Activated CD4-positive, alpha-beta T cell treated with anti-CD3 and anti-CD28 coated beads for 36 hours (primary cell): ENCODE measurements at regions of chr6 and their contacts with region 1.

Region 1: GRCh38 chr6:17599885-17600526 is at the start of gene FAM8A1:
- DNase-seq: peak; percentile 98
- ATAC-seq: peak; percentile 83
- H3K4me3 Mint-ChIP-seq: peak within 1 kb of the TSS; percentile 75
- H3K27ac Mint-ChIP-seq: peak within 1 kb of the TSS; percentile 66
- H3K4me1 Mint-ChIP-seq: peaks cover 41% of the 10 kb centered on the region
- H3K27me3 Mint-ChIP-seq: no peaks in the 10 kb centered on the region
- total RNA-seq, gene FAM8A1: 3.3 to 4.1 TPM

Region 2: DNA sequence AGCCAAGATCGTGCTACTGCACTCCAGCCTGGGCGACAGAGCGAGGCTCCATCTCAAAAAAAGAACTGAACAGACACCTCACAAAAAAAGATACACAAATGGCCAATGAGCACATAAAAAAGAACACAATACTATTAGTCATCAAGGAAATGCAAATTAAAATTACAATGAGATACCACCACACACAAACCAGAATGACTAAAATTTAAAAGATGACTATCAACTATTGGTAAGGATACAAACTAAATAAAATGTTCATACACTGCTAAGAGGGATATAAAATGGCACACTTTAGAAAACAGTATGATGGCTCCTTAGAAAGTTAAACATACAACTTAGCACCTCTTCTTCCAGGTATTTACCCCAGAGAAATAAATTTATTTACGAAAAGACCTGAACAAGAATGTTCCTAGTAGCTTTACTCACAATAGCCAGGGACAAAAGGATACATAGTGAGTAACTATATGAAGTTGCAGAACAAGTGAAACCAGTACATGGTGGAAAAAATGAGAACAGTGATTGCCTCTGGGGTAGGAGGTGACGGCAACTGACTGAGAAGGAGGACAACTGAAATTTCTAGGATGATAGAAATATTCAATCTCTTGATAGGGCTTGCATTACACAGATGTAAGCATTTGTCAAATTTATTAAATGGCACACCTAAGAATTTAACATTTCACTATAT is 53.3 kb after region 1 on chr6:
- CTCF ChIA-PET with region 1: interaction called, 3 read pairs
- POLR2A ChIA-PET with region 1: no interaction called
- intact Hi-C with region 1: loop called in 1 of 2 experiments (anchors 5 kb)
- DNase-seq: no peak
- ATAC-seq: peak; percentile 87
- H3K4me3 Mint-ChIP-seq: no peak overlapping the region
- H3K27ac Mint-ChIP-seq: peak overlapping the region; percentile 66
- H3K4me1 Mint-ChIP-seq: peaks cover 19% of the 10 kb centered on the region
- H3K27me3 Mint-ChIP-seq: no peaks in the 10 kb centered on the region

Region 3: DNA sequence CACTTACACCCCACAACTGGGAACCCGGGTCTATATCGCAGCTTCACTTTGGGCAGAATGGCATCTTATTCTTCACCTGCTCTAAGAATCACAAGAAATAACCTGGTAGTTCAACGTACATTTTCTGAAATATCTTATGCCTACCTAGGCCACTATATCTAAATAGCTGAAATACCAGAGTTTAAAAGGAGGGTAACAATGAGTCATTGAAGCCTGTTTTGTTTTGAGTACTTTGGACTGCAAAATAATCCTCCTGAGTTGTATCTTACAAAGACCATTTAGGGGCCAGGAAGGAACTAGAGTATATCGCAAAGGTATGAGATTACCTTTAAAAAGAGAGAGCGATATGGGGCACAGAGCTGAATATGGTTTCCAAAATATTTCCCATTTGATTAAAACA is 203.4 kb after region 1 on chr6:
- CTCF ChIA-PET with region 1: no interaction called
- POLR2A ChIA-PET with region 1: no interaction called
- intact Hi-C with region 1: loop called in 1 of 2 experiments (anchors 5 kb)
- DNase-seq: no peak
- ATAC-seq: no peak
- H3K4me3 Mint-ChIP-seq: no peak overlapping the region
- H3K27ac Mint-ChIP-seq: no peak overlapping the region
- H3K4me1 Mint-ChIP-seq: no peaks in the 10 kb centered on the region
- H3K27me3 Mint-ChIP-seq: peaks cover 7% of the 10 kb centered on the region

Region 4: DNA sequence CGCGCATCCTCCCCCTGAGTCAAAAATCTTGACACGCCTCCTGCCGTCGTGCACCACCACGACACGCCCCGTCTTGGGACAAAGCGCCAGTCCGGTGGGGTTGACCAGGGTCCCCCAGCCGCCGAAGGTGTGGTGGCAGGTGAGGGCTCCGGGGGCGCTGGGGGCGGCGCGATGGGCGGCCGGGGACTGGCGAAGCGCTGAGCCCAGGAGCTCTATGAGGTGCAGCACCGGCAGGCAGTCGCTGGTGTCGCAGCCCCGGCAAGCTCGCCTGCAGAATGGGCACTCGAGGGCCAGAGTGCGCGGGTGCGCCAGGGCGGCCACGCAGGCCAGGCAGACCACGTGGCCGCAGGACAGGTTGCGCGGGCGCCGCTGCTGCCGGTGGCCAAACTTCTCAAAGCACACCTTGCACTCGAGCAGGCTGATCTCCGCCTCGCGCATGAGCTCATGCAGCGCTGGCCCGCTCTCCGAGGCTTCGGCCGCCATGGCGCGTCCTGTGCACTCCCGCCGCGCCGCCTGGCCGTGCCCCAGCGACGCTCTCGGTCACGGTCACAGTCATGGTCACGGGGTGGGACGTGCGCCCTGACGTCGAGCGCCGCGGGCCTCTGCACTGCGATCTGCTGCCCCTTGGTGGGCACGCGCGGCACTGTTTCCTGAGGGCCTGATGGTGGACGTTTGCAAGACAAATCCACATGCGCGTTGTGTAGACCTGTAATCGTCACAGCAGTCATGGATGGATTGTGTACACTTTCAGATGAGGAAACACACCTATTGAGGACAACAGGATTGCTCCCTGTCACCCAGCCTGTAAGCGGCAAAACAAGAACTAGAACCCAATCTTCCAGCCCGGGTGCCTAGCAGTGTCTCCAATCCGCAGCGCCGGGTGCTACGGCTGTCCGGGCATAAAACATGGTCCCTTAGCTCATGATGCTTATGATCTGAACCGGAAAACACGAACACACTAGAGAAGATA is 522.4 kb after region 1 on chr6 and contains the start of gene NHLRC1:
- CTCF ChIA-PET with region 1: no interaction called
- POLR2A ChIA-PET with region 1: no interaction called
- intact Hi-C with region 1: loop called in 1 of 2 experiments (anchors 1 kb)
- DNase-seq: peak; percentile 87
- ATAC-seq: peak; percentile 96
- H3K4me3 Mint-ChIP-seq: peak within 1 kb of the TSS; percentile 68
- H3K27ac Mint-ChIP-seq: peak within 1 kb of the TSS; percentile 23
- H3K4me1 Mint-ChIP-seq: peaks cover 11% of the 10 kb centered on the region
- H3K27me3 Mint-ChIP-seq: peaks cover 39% of the 10 kb centered on the region
- total RNA-seq, gene NHLRC1: 0.11 to 0.16 TPM

Region 5: DNA sequence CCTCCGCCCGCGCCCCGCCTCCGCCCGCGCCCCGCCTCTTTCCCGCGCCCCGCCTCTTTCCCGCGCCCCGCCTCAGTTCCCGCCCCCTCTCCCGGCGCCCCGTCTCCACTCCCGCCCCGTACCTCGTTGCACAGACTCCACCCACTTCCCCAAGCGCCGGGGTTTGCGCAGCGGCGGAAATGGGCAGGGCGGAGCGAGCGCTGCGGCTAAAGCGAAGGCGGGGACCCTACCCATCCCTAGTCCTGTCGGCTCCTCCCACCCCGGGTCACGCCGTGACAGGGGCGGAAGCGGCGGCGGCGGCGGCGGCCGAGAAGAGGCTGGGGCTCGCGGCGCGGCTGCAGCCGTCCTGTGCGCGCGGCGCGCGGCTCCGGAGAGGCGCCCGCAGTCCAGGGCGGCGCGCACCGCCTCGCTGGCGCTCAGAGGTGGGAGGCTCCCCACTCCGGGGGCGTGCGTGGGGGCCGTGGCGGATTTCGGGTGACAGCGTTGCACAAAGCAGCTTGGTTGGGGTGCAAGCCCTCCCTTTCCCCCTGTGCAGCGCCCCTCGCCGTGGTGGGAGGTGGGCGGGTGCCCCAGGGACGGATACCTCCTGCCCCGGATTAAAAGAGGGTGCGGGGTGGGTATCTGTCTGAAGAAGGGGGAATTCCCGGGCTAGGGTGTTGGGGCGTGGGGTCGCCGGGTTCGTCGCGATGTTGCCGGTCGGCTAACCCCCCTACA is 555.3 kb after region 1 on chr6 and contains the start of gene KDM1B:
- CTCF ChIA-PET with region 1: no interaction called
- POLR2A ChIA-PET with region 1: no interaction called
- intact Hi-C with region 1: loop called in 1 of 2 experiments (anchors 1 kb)
- DNase-seq: peak; percentile 99
- ATAC-seq: peak; percentile 97
- H3K4me3 Mint-ChIP-seq: peak within 1 kb of the TSS; percentile 93
- H3K27ac Mint-ChIP-seq: peak within 1 kb of the TSS; percentile 90
- H3K4me1 Mint-ChIP-seq: peaks cover 27% of the 10 kb centered on the region
- H3K27me3 Mint-ChIP-seq: no peaks in the 10 kb centered on the region
- total RNA-seq, gene KDM1B: 13.4 to 13.9 TPM